Transverse colon (tissue), 4 donors: ENCODE measurements at regions of chr15 and their contacts with region 1.

Region 1: GRCh38 chr15:71800835-71801745 is 9.3 kb upstream of the NR2E3 start:
- DNase-seq: peak; percentile 55
- H3K4me3 ChIP-seq: no peak overlapping the region
- H3K27ac ChIP-seq: no peak overlapping the region
- H3K4me1 ChIP-seq: peaks cover 0 to 8% (median 5%) of the 10 kb centered on the region in 4 donors
- H3K27me3 ChIP-seq: no peaks in the 10 kb centered on the region
- CTCF ChIP-seq: peak; percentile 77 to 96 (median 81)
- EP300 ChIP-seq: no peak
- POLR2A ChIP-seq: no peak

Region 2: DNA sequence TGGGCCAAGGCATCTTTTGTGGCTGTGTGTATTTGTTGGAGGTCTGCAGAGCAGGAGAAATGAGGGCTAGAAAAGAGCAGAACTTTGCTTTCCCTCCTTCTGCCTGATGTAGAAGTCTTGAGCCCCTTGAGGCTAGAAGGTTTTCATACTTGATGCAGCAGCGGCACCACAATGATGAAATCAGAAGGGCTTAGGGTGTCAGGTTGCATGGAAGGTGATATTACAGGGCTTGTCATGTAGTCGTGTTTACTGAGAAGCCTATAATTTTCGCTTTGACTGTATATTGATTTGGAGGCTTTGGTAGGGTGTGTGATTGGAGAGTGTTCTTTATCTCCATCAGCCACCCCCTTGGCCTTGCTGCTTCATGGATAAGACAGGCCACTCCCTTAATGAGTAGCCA is 346.0 kb before region 1 on chr15:
- in situ Hi-C with region 1: loop called in 1 of 4 experiments (anchors 10 kb)
- intact Hi-C with region 1: no loop called
- DNase-seq: no peak
- H3K4me3 ChIP-seq: no peak overlapping the region
- H3K27ac ChIP-seq: no peak overlapping the region
- H3K4me1 ChIP-seq: peaks cover 0 to 13% (median 0%) of the 10 kb centered on the region in 4 donors
- H3K27me3 ChIP-seq: no peaks in the 10 kb centered on the region
- CTCF ChIP-seq: no peak
- EP300 ChIP-seq: no peak
- POLR2A ChIP-seq: no peak

Region 3: GRCh38 chr15:71743861-71744382 is 57.2 kb before region 1 on chr15:
- in situ Hi-C with region 1: no loop called
- intact Hi-C with region 1: loop called (anchors 10 kb)
- DNase-seq: peak; percentile 67
- H3K4me3 ChIP-seq: no peak overlapping the region
- H3K27ac ChIP-seq: no peak overlapping the region
- H3K4me1 ChIP-seq: peaks cover 0 to 28% (median 15%) of the 10 kb centered on the region in 4 donors
- H3K27me3 ChIP-seq: no peaks in the 10 kb centered on the region
- CTCF ChIP-seq: peak; percentile 75 to 85 (median 76)
- EP300 ChIP-seq: no peak
- POLR2A ChIP-seq: no peak

Region 4: GRCh38 chr15:71888797-71889196 is 87.7 kb after region 1 on chr15:
- in situ Hi-C with region 1: no loop called
- intact Hi-C with region 1: no loop called
- DNase-seq: no peak
- H3K4me3 ChIP-seq: no peak overlapping the region
- H3K27ac ChIP-seq: no peak overlapping the region
- H3K4me1 ChIP-seq: peaks cover 0 to 14% (median 5%) of the 10 kb centered on the region in 4 donors
- H3K27me3 ChIP-seq: no peaks in the 10 kb centered on the region
- CTCF ChIP-seq: no peak
- EP300 ChIP-seq: no peak
- POLR2A ChIP-seq: no peak